ENCODE measurements at regions of chr6 and their contacts with region 1.

Region 1: DNA sequence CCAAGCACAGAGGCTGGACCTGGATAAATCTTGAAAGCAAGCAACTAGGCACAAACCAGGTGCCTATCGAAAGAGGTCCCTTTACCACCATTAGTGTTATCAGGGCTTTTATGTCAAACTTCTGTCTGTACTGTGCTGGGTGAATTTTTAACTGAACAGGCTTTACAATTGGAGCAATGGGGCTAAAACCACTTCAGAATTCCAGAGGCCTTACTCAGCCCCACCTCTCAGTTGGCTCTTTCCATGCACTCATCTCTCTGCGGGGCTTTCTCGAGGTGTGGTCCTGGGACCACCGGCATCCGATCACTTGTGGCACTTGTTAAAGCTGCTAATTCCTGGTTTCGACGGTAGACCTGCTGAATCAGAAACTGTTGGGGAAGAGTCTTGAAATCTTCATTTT is 232.5 kb downstream of the SOX4 start:
- DNase-seq: no peak
- ATAC-seq: no peak
- H3K4me3 ChIP-seq: no peak overlapping the region
- H3K27ac ChIP-seq: peak overlapping the region; percentile 37; the same call in 1 of the 2 replicates
- H3K4me1 ChIP-seq: peaks cover 32% of the 10 kb centered on the region
- H3K27me3 ChIP-seq: no peaks in the 10 kb centered on the region
- CTCF ChIP-seq: no peak

Region 2: DNA sequence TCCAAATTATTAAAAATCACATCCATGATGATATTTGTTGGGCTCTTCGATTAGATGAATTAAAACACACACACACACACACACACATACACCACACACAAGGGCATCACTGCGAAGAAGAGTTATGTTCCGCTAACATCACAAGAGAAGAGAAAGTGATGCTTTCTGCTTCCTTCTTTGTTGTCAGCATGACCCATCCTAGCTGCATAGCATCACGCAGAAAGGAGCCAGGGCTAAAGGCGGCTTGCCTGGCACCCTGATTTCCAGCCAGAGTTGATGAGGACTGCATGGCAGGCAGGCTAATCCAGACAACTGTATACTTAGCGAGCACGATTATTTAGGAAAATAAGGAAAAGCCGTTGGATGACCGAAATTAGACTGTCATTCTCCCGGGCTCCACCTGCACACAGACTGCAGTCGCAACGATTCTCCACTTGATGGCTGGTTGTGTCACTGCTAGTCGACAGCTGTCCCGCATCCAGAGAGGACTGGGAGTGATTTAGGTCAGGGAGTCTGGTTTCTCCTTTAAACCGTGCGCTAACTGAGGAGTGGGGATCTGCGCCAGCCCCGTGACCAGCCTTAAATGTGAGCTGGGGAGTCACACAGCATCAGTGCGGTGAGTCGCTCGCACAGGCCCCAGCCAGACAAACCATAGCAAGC is 303.1 kb before region 1 on chr6:
- CTCF ChIA-PET with region 1: no interaction called
- POLR2A ChIA-PET with region 1: no interaction called
- in situ Hi-C with region 1: no loop called
- intact Hi-C with region 1: no loop called
- DNase-seq: no peak
- ATAC-seq: peak; percentile 78
- H3K4me3 ChIP-seq: no peak overlapping the region; a peak in 1 of 4 replicates
- H3K27ac ChIP-seq: no peak overlapping the region
- H3K4me1 ChIP-seq: no peaks in the 10 kb centered on the region
- H3K27me3 ChIP-seq: peaks cover 10% of the 10 kb centered on the region
- CTCF ChIP-seq: peak; percentile 41

Region 3: GRCh38 chr6:22926790-22927354 is 1100.8 kb after region 1 on chr6:
- CTCF ChIA-PET with region 1: no interaction called
- POLR2A ChIA-PET with region 1: interaction called, 10 read pairs
- in situ Hi-C with region 1: no loop called
- intact Hi-C with region 1: no loop called
- DNase-seq: no peak
- ATAC-seq: no peak
- H3K4me3 ChIP-seq: no peak overlapping the region
- H3K27ac ChIP-seq: no peak overlapping the region
- H3K4me1 ChIP-seq: no peaks in the 10 kb centered on the region
- H3K27me3 ChIP-seq: no peaks in the 10 kb centered on the region
- CTCF ChIP-seq: no peak

Measured in Panc1 (cell line).